ENCODE measurements at regions of chr2 and their contacts with region 1.

Region 1: GRCh38 chr2:221573430-221574230 is 1.5 kb upstream of the EPHA4 start:
- DNase-seq: peak; percentile 86
- ATAC-seq: peak; percentile 78 to 81

Region 2: DNA sequence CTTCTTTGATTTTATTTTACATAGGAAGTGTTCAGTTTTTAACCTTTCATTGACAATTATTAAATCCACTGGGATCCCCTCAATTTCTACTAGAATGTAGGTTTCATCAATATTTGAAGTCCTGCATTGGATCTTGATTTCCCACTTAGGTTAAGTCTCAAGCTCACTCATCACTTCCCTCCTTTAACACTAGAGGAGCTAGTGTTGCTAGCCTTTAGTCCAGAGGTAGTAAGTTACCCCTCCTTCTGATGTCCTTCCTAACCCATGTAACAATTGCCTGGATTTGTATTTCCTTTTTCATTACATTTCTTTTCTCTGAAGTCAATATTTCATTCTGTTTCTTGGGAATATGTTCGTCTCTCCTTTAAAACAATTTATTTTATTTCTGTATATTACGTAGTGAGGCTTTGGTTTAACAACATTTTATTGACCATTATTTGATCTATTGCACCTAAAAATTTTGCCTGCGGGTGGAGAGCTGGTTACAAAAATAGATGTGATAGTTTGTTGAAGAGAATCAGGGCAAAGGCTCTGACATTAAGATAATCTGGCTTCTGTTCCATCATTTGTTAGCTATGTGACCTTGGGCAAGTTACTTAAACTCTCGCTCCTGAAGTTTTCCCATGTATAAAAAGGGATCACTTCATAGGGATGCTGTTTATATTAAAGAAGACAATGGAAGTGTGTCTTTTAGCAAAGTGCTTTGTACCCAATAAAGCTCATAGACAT is 1113.2 kb before region 1 on chr2:
- intact Hi-C with region 1: loop called in 1 of 2 experiments (anchors 5 kb)
- DNase-seq: no peak
- ATAC-seq: no peak

Region 3: DNA sequence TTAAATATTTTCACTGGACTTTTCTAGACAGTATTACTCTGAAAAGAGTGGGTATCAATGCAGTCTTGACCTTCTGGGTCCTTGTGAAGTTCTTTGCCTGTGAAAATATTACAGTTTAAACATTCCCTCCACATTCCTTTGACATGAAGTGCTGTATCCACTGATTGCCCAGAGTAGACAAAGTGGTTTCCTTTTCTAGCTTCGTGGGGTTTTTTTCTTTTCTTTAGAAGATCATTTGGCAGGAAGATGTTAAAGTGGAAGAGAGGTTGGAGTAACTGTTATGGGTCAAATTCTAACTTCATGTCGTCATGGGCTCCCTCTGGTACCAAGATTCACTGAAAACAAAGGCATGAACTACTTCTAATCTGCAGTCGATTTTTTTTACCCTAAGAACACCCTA is 498.4 kb before region 1 on chr2:
- intact Hi-C with region 1: loop called in 1 of 2 experiments (anchors 10 kb)
- DNase-seq: no peak
- ATAC-seq: no peak

Region 4: GRCh38 chr2:221429741-221430491 is 143.7 kb before region 1 on chr2:
- intact Hi-C with region 1: loop called in 1 of 2 experiments (anchors 5 kb)
- DNase-seq: peak; percentile 28
- ATAC-seq: peak; percentile 59 to 84

Region 5: DNA sequence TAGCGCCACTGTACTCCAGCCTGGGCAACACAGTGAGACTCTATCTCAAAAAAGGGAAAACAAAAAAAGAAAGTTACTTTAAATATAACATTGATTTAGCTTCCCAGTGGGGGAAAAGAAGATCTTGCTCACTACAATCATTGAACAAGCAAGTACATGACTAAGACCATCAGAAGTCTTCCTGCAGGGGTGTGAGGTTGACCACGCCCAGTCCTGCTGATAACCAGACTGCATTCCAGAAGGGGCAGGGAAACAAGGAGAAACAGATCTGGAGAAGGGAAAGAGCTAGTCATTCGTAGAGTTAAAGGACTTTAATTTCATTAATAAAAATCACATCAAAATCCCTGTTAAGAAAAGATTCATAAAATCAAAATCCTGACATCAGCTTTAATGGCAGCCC is 79.1 kb before region 1 on chr2:
- intact Hi-C with region 1: no loop called
- DNase-seq: peak; percentile 43
- ATAC-seq: peak; percentile 53 to 69

Region 6: DNA sequence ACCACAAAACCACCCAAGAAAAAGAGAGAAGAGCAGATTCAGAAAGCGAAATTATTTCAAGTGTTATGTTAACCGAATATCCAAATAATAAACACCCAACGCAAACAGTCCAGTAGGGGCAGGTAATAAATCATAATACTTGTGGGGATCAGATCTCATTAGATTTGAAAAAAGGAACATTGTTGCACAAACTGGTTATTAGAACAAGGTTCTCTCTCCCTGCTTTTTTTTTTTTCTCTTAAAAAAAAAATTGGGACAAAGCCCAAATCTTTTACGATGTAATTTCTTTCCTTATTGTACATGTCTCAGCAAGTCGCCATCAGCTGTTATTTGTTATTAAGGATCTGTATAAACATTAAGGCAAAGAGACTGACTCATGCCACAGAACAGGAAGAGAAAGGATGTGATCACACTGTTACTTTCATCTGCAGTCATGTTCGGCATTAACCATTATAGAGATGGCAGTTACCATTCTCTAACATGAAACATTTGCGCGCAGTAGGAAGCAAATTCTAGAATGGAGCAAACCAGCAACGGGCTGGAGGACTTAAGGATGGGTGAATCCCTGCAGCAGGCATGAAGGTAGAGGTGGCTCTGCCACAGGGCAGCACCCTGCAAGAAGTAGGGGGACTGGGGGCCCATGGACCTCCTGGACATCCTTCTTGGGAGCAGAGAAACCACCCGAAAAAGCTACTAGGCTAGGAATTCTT is 43.5 kb before region 1 on chr2:
- intact Hi-C with region 1: loop called in 1 of 2 experiments (anchors 5 kb)
- DNase-seq: no peak
- ATAC-seq: peak in 1 of 2 donors; percentile 20

Region 7: GRCh38 chr2:221896505-221897151 is 323.0 kb after region 1 on chr2:
- intact Hi-C with region 1: no loop called
- DNase-seq: peak; percentile 34
- ATAC-seq: peak; percentile 91 to 94

Region 8: DNA sequence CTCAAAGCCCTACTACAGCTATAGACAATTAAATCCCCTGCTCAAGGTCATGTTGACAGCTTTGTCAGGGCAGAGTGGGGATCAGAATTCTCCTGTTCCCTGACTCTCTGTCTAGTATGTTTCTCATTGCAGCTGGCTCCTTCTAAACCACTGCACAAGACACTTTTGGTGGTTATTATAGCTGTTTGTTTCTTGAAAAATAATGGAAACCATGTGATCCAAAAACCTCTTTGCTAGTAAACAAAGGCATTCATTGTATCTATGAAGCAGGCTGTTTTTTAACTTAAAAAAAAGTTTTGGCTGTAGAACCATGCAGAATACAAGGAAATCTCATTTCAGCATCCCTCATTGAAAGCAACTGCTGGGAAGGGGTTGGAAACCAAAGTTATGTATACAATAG is 350.9 kb after region 1 on chr2:
- intact Hi-C with region 1: no loop called
- DNase-seq: no peak
- ATAC-seq: no peak

Measured in left cardiac atrium (tissue), 4 donors.